A673 (cell line): ENCODE measurements at regions of chr20 and their contacts with region 1.

Region 1: DNA sequence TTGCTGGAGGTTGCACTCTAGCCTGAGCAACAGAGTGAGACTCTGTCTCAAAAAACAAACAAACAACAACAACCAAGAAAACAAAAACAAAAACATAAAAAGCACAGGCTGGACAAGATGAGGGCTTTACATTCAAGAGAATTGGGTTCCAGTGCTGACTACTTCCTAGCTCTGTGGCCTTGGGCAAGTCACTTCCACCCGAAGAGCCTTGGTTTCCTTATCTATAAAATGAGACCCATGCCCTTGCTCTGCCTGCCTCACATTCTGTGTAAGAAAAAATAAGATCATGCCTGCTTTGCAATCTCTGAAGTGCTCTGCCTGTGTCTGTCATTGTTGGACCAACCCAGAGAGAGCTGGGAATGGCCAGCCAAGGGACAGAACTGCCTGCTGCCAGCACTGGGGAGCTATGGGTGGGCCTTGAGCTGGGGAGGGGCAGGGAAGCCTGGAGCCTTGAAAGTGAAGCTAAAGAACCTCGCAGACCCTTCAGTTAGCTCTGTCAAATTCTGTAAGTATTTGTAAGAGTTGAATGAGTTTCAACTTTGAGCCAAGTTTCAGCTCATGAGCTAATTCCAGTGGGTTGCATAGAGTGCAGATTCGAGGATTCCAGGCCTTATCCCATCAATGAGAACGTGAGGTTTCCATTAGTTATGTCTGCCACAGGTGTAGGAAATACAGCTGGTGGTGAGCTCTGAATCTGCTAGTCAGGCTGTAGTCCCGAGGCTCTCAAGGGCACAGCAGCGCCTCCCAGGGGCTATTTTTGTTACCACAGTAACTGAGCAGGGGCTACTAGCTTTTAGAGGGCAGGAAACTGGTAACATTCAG is 93.2 kb downstream of the DLGAP4 start:
- DNase-seq: peak; percentile 61
- H3K4me3 ChIP-seq: no peak overlapping the region
- H3K27ac ChIP-seq: no peak overlapping the region
- H3K4me1 ChIP-seq: no peaks in the 10 kb centered on the region
- H3K27me3 ChIP-seq: no peaks in the 10 kb centered on the region
- CTCF ChIP-seq: peak; percentile 74

Region 2: GRCh38 chr20:36199345-36200257 is 199.8 kb before region 1 on chr20:
- CTCF ChIA-PET with region 1: interaction called, 11 read pairs
- POLR2A ChIA-PET with region 1: no interaction called
- intact Hi-C with region 1: no loop called
- DNase-seq: peak; percentile 80
- H3K4me3 ChIP-seq: no peak overlapping the region
- H3K27ac ChIP-seq: no peak overlapping the region
- H3K4me1 ChIP-seq: no peaks in the 10 kb centered on the region
- H3K27me3 ChIP-seq: no peaks in the 10 kb centered on the region
- CTCF ChIP-seq: peak; percentile 86

Region 3: GRCh38 chr20:36273414-36274180 is 125.8 kb before region 1 on chr20:
- CTCF ChIA-PET with region 1: interaction called, 15 read pairs
- POLR2A ChIA-PET with region 1: no interaction called
- intact Hi-C with region 1: no loop called
- DNase-seq: peak; percentile 30
- H3K4me3 ChIP-seq: no peak overlapping the region
- H3K27ac ChIP-seq: no peak overlapping the region
- H3K4me1 ChIP-seq: no peaks in the 10 kb centered on the region
- H3K27me3 ChIP-seq: no peaks in the 10 kb centered on the region
- CTCF ChIP-seq: peak; percentile 45

Region 4: DNA sequence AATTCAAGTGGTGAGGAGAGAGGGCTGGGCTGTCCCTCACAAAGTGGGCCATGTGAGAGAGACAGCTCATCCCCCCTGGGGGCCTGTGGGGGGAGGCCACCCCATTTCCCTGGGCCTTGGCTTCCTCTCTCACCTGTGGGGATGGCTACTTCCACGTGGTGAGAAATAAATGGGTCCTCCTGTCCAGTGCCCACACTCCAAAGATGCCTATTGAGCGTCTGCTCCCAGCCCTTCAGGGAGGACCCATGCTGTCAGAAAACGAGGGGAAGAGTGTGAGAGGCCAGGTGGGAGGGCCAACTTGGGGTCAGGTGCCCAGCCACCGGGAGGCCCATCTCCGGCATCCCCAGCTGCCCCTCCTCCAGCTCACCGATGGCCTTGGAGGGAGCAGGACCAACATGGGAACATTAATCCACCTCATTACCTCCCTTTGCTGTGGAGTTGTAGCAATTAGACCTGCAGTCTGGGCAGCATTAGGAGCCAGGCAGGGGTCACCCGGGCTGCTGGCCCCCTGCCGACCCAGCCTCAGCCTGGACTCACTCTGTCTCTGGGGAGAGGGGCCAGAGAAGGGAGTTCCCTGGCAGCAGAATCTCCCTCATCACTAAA is 68.3 kb before region 1 on chr20:
- CTCF ChIA-PET with region 1: interaction called, 14 read pairs
- POLR2A ChIA-PET with region 1: no interaction called
- intact Hi-C with region 1: no loop called
- DNase-seq: no peak
- H3K4me3 ChIP-seq: no peak overlapping the region
- H3K27ac ChIP-seq: no peak overlapping the region
- H3K4me1 ChIP-seq: no peaks in the 10 kb centered on the region
- H3K27me3 ChIP-seq: no peaks in the 10 kb centered on the region
- CTCF ChIP-seq: no peak